ENCODE measurements at regions of chr10 and their contacts with region 1.

Region 1: GRCh38 chr10:103859161-103860086 is 4.0 kb upstream of the SH3PXD2A start:
- DNase-seq: peak; percentile 77
- H3K4me3 Mint-ChIP-seq: no peak overlapping the region
- H3K27ac Mint-ChIP-seq: no peak overlapping the region
- H3K4me1 Mint-ChIP-seq: peaks cover 18% of the 10 kb centered on the region
- H3K27me3 Mint-ChIP-seq: no peaks in the 10 kb centered on the region
- CTCF ChIP-seq: peak; percentile 71

Region 2: DNA sequence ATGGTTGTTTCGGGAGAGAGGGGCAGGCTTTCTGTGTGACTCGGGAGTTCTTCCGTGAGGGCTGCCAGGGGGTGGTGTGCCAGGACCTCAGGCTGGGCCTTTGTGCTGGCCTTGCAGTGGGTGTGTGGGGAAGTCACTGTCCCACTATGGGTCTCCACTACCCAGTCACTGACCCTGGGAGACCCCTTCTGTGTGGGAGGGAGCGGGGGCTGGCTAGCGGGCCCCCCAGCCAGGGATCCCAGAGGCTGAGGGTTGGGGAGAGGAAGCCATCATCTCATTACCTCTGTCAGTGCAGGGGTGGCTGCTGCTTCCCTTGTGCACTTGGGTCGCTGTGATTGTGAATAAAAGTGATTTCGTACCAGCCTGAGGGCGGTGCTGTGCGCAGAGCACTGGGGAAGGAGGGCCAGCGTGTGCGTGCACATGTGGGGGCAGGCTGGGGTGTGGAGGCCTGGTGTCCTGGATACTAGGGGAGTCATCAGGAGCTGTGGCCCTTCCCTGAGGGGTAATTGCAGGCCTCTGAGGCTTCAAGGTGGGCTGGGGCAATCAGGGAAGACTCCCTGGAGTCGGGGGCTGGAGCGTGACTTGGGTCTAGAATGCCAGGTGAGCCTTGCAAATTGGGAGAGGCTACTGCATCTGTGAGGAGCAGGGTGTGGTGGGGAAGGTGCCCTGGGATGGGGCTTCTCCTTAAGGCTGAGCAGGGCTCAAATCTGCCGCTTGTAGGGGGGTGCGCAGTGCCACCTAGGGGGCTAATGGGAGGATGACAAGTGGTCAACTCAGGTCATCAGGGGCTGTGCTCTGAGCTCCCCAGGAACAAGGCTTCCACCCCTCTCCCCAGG is 267.0 kb before region 1 on chr10:
- CTCF ChIA-PET with region 1: no interaction called
- POLR2A ChIA-PET with region 1: no interaction called
- intact Hi-C with region 1: loop called (anchors 10 kb)
- DNase-seq: peak; percentile 51
- H3K4me3 Mint-ChIP-seq: no peak overlapping the region
- H3K27ac Mint-ChIP-seq: no peak overlapping the region
- H3K4me1 Mint-ChIP-seq: no peaks in the 10 kb centered on the region
- H3K27me3 Mint-ChIP-seq: no peaks in the 10 kb centered on the region
- CTCF ChIP-seq: peak; percentile 50

Region 3: GRCh38 chr10:103759100-103759781 is 100.2 kb before region 1 on chr10:
- CTCF ChIA-PET with region 1: interaction called, 10 read pairs
- POLR2A ChIA-PET with region 1: interaction called, 8 read pairs
- intact Hi-C with region 1: no loop called
- DNase-seq: peak; percentile 63
- H3K4me3 Mint-ChIP-seq: no peak overlapping the region
- H3K27ac Mint-ChIP-seq: peak overlapping the region; percentile 92
- H3K4me1 Mint-ChIP-seq: peaks cover 41% of the 10 kb centered on the region
- H3K27me3 Mint-ChIP-seq: no peaks in the 10 kb centered on the region
- CTCF ChIP-seq: no peak

Region 4: GRCh38 chr10:103843854-103844570 is 15.4 kb before region 1 on chr10:
- CTCF ChIA-PET with region 1: interaction called, 13 read pairs
- POLR2A ChIA-PET with region 1: interaction called, 3 read pairs
- intact Hi-C with region 1: no loop called
- DNase-seq: no peak
- H3K4me3 Mint-ChIP-seq: no peak overlapping the region
- H3K27ac Mint-ChIP-seq: no peak overlapping the region
- H3K4me1 Mint-ChIP-seq: no peaks in the 10 kb centered on the region
- H3K27me3 Mint-ChIP-seq: no peaks in the 10 kb centered on the region
- CTCF ChIP-seq: no peak

Region 5: DNA sequence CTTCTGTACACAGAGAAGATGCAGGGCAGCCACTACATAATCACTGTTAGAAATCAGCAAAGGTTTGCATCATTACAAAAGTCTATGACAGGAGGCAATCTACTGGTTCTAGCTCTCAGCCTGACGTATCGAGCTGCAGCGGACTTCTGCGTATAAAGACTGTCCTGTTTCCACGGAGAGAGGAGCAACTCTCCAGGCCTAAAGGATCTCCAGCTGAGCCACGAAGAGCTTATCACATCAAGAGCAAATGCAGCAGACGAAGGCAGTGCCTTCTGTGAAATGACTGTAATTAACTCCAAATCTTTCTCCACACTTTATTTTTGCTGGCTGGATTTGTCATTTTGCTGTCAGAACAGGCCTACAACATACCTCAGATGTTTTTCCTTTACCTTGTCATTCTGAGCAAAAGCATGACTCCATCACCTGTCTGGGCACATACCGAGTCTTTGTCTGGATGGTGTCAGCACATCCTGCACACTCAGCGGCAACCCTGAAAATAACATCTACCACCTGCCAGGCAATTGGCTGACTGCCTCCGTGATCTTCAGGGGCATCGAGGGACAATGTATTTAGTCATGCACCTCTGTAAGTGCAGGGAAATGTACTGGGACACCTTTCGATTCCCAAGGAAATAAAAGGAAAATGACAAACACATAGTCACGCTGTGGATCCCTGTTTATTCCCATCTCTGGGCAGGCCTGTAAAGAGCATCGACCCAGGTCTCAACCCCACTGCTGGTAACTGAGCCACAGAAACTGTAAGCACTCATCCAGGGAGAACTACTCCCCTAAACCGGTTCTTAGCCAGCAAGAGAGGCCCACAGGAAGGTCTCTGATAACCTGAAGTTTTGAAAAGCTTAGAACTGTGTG is 22.2 kb after region 1 on chr10:
- CTCF ChIA-PET with region 1: interaction called, 23 read pairs
- POLR2A ChIA-PET with region 1: interaction called, 18 read pairs
- intact Hi-C with region 1: loop called (anchors 1 kb)
- DNase-seq: peak; percentile 86
- H3K4me3 Mint-ChIP-seq: no peak overlapping the region
- H3K27ac Mint-ChIP-seq: peak overlapping the region; percentile 68
- H3K4me1 Mint-ChIP-seq: peaks cover 38% of the 10 kb centered on the region
- H3K27me3 Mint-ChIP-seq: no peaks in the 10 kb centered on the region
- CTCF ChIP-seq: no peak

Region 6: DNA sequence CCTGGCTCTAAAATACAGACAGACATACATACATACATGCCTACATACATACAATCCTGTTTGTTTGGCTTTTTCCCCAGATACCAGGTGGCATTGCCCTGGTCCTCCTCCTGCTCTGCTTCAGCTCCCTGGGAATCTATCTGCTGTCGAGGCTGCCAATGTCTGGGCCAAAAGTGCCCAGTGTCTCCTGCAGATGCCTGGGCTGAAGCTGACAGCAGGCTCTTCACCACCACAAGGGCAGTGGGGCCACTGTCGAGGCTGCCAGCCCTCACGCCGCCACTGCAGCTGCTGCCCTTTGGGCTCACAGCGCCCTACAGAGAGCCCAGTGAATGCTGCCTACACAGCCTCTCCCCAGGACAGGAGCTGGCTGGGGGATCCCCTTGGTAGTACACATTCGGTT is 76.6 kb after region 1 on chr10:
- CTCF ChIA-PET with region 1: no interaction called
- POLR2A ChIA-PET with region 1: no interaction called
- intact Hi-C with region 1: no loop called
- DNase-seq: no peak
- H3K4me3 Mint-ChIP-seq: no peak overlapping the region
- H3K27ac Mint-ChIP-seq: no peak overlapping the region
- H3K4me1 Mint-ChIP-seq: no peaks in the 10 kb centered on the region
- H3K27me3 Mint-ChIP-seq: no peaks in the 10 kb centered on the region
- CTCF ChIP-seq: no peak

Measured in MCF 10A (cell line).